T-cell (primary cell): ENCODE measurements at regions of chr6 and their contacts with region 1.

Region 1: GRCh38 chr6:137799950-137800568 is 67.0 kb upstream of the TNFAIP3 start:
- DNase-seq: peak in 34 of 35 experiments; percentile 32 to 92 (median 70)
- ATAC-seq: peak; percentile 65 to 80 (median 73)
- H3K4me3 ChIP-seq: no peak overlapping the region
- H3K4me3 Mint-ChIP-seq: peak overlapping the region in 1 of 3 donors; percentile 15
- H3K27ac ChIP-seq: peak overlapping the region; percentile 30
- H3K27ac Mint-ChIP-seq: peak overlapping the region; percentile 80 to 82
- H3K4me1 ChIP-seq: peaks cover 23 to 27% of the 10 kb centered on the region in 2 experiments
- H3K4me1 Mint-ChIP-seq: peaks cover 55 to 70% (median 61%) of the 10 kb centered on the region in 3 donors
- H3K27me3 ChIP-seq: no peaks in the 10 kb centered on the region
- H3K27me3 Mint-ChIP-seq: no peaks in the 10 kb centered on the region

Region 2: DNA sequence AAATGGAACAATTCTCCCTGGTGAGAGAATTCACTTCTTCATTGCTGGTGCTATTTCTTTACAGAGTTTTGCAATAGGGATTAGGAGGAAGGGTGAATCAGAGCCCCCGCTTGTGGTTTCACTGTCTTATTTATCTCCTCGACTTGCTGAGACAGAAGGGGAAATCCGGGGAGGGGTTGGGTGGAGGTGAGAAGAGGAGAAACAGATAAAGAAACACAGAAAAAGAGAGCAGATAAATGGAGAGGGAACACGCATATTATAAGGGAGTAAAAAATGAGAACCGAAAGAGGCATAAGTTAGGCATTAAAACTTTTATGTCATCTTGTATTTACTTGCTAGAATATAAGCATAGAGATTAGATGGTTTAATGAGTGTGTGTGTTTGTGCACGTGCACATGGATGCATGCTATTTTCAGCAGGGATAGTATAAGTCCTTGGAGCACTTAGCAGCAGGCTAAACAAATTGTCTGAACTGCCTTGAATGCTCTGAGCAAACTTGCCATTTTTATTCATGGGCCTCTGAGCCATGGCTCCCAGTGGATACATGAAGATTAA is 410.8 kb before region 1 on chr6:
- CTCF ChIA-PET with region 1: no interaction called
- POLR2A ChIA-PET with region 1: no interaction called
- DNase-seq: peak; percentile 27 to 82 (median 62)
- ATAC-seq: peak; percentile 99 to 100 (median 99)
- H3K4me3 ChIP-seq: peak overlapping the region; percentile 2
- H3K4me3 Mint-ChIP-seq: peak overlapping the region; percentile 45 to 85 (median 62)
- H3K27ac ChIP-seq: peak overlapping the region; percentile 81
- H3K27ac Mint-ChIP-seq: peak overlapping the region; percentile 90 to 95
- H3K4me1 ChIP-seq: peaks cover 22 to 47% of the 10 kb centered on the region in 2 experiments
- H3K4me1 Mint-ChIP-seq: peaks cover 65 to 86% (median 70%) of the 10 kb centered on the region in 3 donors
- H3K27me3 ChIP-seq: no peaks in the 10 kb centered on the region
- H3K27me3 Mint-ChIP-seq: no peaks in the 10 kb centered on the region

Region 3: DNA sequence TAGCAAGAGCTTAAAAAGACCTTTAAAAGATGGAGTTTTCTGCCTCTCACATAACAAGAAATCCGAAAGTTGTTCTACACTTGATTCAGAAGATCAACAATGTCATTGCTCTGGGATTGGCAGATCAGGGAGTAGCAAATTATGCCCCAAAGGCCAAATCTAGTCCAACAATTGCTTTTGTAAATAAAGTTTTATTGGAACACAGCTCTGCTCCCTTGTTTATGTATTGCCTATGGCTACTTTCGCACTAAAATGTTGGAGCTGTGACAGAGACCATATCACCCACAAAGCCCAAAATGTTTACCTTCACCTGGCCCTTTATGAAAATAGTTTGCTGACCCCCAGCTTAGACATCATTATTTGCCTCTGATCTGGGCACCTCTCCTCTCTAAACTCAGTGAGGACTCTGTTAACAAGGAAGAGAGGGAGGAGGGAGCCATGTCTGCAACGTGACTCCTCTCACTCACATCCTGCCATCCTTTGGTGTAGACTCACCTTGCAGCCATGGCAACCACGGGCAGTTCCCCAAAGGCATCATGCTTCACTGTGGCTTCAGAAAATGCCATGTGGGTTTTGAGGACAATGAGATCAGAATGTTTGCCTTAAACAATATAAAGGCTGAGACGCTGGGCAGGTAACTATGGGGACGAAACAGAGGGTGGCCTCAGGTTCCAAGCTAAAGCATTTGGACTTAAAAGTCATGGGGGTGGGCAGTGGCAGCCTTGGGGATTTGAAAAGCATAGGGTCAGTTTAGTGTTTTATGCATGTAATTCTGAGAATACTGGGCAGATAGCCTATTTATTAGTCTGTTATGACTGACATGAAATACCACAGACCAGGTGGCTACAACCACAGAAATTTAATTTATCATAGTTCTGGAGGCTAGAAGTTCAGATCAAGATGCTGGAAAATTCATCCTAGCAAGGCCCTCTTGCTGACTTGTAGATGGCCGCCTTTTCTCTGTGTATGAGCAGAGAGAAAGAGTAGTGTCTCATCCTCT is 82.7 kb before region 1 on chr6:
- CTCF ChIA-PET with region 1: interaction called, 3 to 15 read pairs
- POLR2A ChIA-PET with region 1: interaction called, 3 to 8 read pairs
- DNase-seq: peak; percentile 25 to 91 (median 81)
- ATAC-seq: peak; percentile 63 to 72 (median 68)
- H3K4me3 ChIP-seq: no peak overlapping the region
- H3K4me3 Mint-ChIP-seq: peak overlapping the region in 1 of 3 donors; percentile 46
- H3K27ac ChIP-seq: peak overlapping the region; percentile 91
- H3K27ac Mint-ChIP-seq: peak overlapping the region; percentile 83 to 95
- H3K4me1 ChIP-seq: peaks cover 20 to 24% of the 10 kb centered on the region in 2 experiments
- H3K4me1 Mint-ChIP-seq: peaks cover 47 to 57% (median 50%) of the 10 kb centered on the region in 3 donors
- H3K27me3 ChIP-seq: no peaks in the 10 kb centered on the region
- H3K27me3 Mint-ChIP-seq: no peaks in the 10 kb centered on the region

Region 4: DNA sequence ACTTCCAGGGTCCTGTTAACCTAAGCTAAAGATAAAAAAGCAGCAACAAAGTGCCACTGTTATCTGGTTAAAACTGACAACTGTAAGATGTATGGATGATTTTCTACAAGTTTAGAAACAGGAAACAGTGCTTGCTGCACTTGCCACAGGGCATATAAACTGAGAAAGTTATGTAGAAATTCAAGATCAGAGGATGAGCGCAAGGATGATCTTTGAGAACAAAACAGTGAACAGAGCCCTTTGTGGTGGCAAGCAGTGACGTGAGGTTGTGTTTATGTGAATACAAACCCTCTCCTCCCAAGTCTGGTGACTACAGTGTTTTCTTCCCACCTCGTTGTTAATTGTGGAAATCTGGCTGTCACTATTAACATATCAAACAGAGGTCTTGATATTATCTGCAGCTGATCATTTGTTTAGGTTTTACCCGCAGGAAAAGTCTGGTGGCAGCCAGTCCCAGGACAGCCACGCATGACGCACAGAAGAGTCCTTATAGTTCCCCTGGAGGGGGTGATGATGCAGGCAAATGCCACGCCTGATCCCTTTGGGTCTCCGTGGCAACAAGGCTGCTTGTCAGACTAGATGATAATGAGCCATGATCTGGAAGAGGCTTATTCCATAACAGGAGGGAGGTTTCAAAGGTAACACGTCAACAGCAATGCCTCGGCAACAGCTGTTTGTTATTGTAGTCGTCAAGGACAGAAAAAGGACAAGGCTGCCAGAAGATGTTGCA is 23.9 kb after region 1 on chr6:
- CTCF ChIA-PET with region 1: interaction called, 8 to 24 read pairs
- POLR2A ChIA-PET with region 1: interaction called, 12 to 43 read pairs
- DNase-seq: peak; percentile 32 to 98 (median 91)
- ATAC-seq: peak; percentile 80 to 91 (median 86)
- H3K4me3 ChIP-seq: peak overlapping the region; percentile 3 to 13
- H3K4me3 Mint-ChIP-seq: peak overlapping the region; percentile 70 to 81 (median 76)
- H3K27ac ChIP-seq: peak overlapping the region; percentile 100
- H3K27ac Mint-ChIP-seq: peak overlapping the region; percentile 95 to 97
- H3K4me1 ChIP-seq: peaks cover 56 to 57% of the 10 kb centered on the region in 2 experiments
- H3K4me1 Mint-ChIP-seq: peaks cover 79 to 90% (median 86%) of the 10 kb centered on the region in 3 donors
- H3K27me3 ChIP-seq: no peaks in the 10 kb centered on the region
- H3K27me3 Mint-ChIP-seq: no peaks in the 10 kb centered on the region

Region 5: GRCh38 chr6:137873273-137873762 is 73.3 kb after region 1 on chr6:
- CTCF ChIA-PET with region 1: interaction called, 3 to 29 read pairs
- POLR2A ChIA-PET with region 1: interaction called, 4 to 31 read pairs
- DNase-seq: peak in 21 of 35 experiments; percentile 22 to 85 (median 47)
- ATAC-seq: peak in 2 of 4 experiments; percentile 14 to 29
- H3K4me3 ChIP-seq: peak overlapping the region in 1 of 2 donors; percentile 23
- H3K4me3 Mint-ChIP-seq: peak overlapping the region; percentile 92 to 98 (median 96)
- H3K27ac ChIP-seq: peak overlapping the region; percentile 99
- H3K27ac Mint-ChIP-seq: peak overlapping the region; percentile 95 to 98
- H3K4me1 ChIP-seq: peaks cover 40 to 44% of the 10 kb centered on the region in 2 experiments
- H3K4me1 Mint-ChIP-seq: peaks cover 89 to 92% (median 90%) of the 10 kb centered on the region in 3 donors
- H3K27me3 ChIP-seq: no peaks in the 10 kb centered on the region
- H3K27me3 Mint-ChIP-seq: no peaks in the 10 kb centered on the region

Region 6: GRCh38 chr6:137944793-137945498 is 144.9 kb after region 1 on chr6:
- CTCF ChIA-PET with region 1: interaction called in 1 of 2 experiments, 13 read pairs
- POLR2A ChIA-PET with region 1: no interaction called
- DNase-seq: peak in 8 of 35 experiments; percentile 6 to 63 (median 14)
- ATAC-seq: peak; percentile 64 to 79 (median 77)
- H3K4me3 ChIP-seq: no peak overlapping the region
- H3K4me3 Mint-ChIP-seq: no peak overlapping the region
- H3K27ac ChIP-seq: no peak overlapping the region
- H3K27ac Mint-ChIP-seq: no peak overlapping the region
- H3K4me1 ChIP-seq: peaks cover under 1 to 8% of the 10 kb centered on the region in 2 experiments
- H3K4me1 Mint-ChIP-seq: peaks cover 18 to 23% (median 19%) of the 10 kb centered on the region in 3 donors
- H3K27me3 ChIP-seq: no peaks in the 10 kb centered on the region
- H3K27me3 Mint-ChIP-seq: no peaks in the 10 kb centered on the region